ENCODE measurements at regions of chr15 and their contacts with region 1.

Region 1: GRCh38 chr15:64209680-64210334 is 47.0 kb upstream of the PPIB start:
- DNase-seq: no peak
- H3K4me3 ChIP-seq: no peak overlapping the region
- H3K27ac ChIP-seq: no peak overlapping the region
- H3K4me1 ChIP-seq: no peaks in the 10 kb centered on the region
- H3K27me3 ChIP-seq: no peaks in the 10 kb centered on the region
- CTCF ChIP-seq: peak; percentile 34 to 37

Region 2: DNA sequence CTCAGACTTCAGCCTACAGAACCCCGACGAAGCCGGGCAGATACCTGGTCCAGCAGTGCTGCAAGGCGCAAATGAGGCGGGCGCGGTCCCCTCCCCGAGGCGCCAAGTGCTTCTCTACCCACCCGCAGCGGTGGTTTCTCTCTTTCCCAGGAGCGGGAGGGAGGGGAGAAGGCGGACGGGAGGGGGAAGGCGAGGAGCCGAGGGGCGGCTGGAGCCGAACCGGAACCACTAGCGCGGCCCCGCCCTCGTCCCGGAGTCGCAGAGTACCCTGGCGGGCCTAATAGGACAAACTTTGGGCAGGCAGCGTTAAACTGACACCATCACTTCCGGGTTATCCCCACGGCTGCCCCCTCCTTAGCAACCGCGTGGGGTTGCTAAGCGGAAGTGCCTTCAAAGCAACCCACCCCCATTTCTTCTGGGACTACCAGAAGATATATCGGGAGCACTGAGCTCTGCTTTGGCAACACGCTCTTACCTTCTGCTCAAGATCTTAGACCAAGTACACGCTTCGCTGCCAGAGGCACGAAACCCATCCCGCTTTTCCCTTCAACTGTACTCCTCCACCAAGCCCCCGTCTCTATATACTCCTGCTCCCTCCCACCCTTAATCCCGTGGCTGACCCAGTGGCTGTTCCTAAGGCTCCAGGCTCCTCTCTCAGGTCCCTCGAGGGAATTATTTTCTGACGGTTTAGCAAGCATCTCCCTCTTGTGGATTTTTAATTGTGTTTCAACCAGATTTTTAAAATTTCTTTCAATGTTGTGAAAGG is 146.3 kb after region 1 on chr15 and contains the start of gene CSNK1G1:
- intact Hi-C with region 1: loop called (anchors 5 kb)
- DNase-seq: peak; percentile 95 to 96
- H3K4me3 ChIP-seq: peak within 1 kb of the TSS; percentile 73 to 99
- H3K27ac ChIP-seq: peak within 1 kb of the TSS; percentile 79 to 87
- H3K4me1 ChIP-seq: peaks cover 0 to 20% (median 11%) of the 10 kb centered on the region in 4 donors
- H3K27me3 ChIP-seq: no peaks in the 10 kb centered on the region
- CTCF ChIP-seq: peak; percentile 26 to 53

Measured in tibial artery (tissue), 4 donors.